Activated B cell treated with CpG ODN at 0.5 μM for 24 hours (primary cell): ENCODE measurements at regions of chrX and their contacts with region 1.

Region 1: GRCh38 chrX:39814391-39814790 is 283.4 kb downstream of the BCOR start:
- DNase-seq: no peak
- ATAC-seq: no peak
- H3K4me3 Mint-ChIP-seq: no peak overlapping the region
- H3K27ac Mint-ChIP-seq: no peak overlapping the region
- H3K4me1 Mint-ChIP-seq: peaks cover 8% of the 10 kb centered on the region
- H3K27me3 Mint-ChIP-seq: peaks cover 11% of the 10 kb centered on the region
- CTCF ChIP-seq: no peak

Region 2: GRCh38 chrX:39827951-39828350 is 13.6 kb after region 1 on chrX:
- CTCF ChIA-PET with region 1: no interaction called
- POLR2A ChIA-PET with region 1: no interaction called
- intact Hi-C with region 1: loop called (anchors 1 kb)
- DNase-seq: peak; percentile 57
- ATAC-seq: peak; percentile 100
- H3K4me3 Mint-ChIP-seq: peak overlapping the region; percentile 4
- H3K27ac Mint-ChIP-seq: no peak overlapping the region
- H3K4me1 Mint-ChIP-seq: peaks cover 29% of the 10 kb centered on the region
- H3K27me3 Mint-ChIP-seq: peaks cover 42% of the 10 kb centered on the region
- CTCF ChIP-seq: no peak

Region 3: DNA sequence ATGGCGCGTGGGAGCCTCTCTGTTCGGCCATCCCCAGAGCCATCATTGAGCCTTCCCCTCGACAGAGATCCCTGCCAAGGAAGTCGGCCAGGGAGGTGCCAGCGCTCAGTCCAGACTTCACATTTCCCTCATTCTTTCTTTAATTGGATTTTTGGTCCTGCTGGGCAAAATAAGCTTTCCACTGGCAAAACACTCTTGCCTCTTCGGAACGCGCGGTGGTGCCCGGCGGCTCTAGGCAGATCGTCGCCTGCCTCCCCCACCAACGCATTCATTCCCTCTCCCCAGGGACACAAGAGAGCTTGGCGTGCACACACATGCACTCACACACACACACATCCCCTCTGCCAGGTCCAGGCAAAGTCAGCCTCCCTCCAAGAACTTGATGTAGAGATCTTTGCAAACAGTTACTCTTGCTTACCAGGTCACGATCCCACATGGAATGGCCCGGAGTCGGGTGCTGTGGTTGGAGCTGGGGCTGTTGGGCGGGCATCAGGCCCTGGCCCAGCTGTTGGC is 26.2 kb after region 1 on chrX:
- CTCF ChIA-PET with region 1: no interaction called
- POLR2A ChIA-PET with region 1: no interaction called
- intact Hi-C with region 1: no loop called
- DNase-seq: no peak
- ATAC-seq: no peak
- H3K4me3 Mint-ChIP-seq: no peak overlapping the region
- H3K27ac Mint-ChIP-seq: peak overlapping the region; percentile 18
- H3K4me1 Mint-ChIP-seq: no peaks in the 10 kb centered on the region
- H3K27me3 Mint-ChIP-seq: peaks cover 14% of the 10 kb centered on the region
- CTCF ChIP-seq: no peak

Region 4: DNA sequence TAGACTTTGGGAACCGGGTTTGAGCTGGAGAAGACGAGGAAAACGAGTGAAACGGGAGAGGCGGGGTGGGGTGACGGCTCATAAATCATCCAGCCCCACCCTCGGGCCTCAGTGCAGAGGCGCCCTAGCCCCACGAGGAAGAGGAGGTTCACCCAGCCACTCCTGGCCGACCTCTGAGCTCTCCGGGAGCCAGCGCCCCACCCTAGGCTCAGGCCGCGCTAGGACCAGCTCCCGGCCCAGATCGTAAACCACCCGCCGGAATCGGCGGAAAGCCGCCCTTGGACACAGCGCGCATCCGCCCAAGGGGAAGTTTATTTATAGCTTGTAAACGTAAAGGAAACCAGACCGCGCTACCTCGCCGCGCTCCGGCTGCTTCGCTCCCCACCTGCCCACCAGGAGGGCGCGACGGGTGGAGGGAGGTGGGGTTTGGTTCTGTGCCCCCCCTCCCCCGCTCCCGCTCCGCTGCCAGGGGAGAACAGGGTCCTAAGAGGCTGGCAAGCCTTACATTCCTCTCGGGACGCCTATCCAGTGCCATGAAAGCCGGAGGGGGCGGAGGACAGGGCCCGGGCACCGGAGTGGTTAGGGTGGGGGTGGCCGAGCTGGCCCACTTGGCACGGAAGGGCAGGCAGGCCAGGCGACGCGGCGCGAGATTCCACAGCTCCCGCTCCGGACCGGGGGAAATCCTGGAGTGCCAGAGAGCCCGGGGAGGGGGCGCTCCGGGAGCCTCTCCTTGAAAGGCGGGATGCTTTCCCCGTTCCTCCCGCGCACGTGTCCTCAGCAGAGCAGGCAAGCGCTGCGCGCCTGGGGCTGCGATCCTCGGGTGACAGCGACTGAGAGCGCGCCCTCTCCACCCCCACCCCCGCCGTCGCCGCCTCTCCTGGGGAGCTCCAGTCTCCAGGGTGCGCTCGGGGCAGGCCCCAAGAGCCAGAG is 199.1 kb after region 1 on chrX:
- CTCF ChIA-PET with region 1: no interaction called
- POLR2A ChIA-PET with region 1: no interaction called
- intact Hi-C with region 1: loop called (anchors 5 kb)
- DNase-seq: peak; percentile 41
- ATAC-seq: peak; percentile 47
- H3K4me3 Mint-ChIP-seq: peak overlapping the region; percentile 76
- H3K27ac Mint-ChIP-seq: peak overlapping the region; percentile 56
- H3K4me1 Mint-ChIP-seq: peaks cover 26% of the 10 kb centered on the region
- H3K27me3 Mint-ChIP-seq: no peaks in the 10 kb centered on the region
- CTCF ChIP-seq: no peak

Region 5: DNA sequence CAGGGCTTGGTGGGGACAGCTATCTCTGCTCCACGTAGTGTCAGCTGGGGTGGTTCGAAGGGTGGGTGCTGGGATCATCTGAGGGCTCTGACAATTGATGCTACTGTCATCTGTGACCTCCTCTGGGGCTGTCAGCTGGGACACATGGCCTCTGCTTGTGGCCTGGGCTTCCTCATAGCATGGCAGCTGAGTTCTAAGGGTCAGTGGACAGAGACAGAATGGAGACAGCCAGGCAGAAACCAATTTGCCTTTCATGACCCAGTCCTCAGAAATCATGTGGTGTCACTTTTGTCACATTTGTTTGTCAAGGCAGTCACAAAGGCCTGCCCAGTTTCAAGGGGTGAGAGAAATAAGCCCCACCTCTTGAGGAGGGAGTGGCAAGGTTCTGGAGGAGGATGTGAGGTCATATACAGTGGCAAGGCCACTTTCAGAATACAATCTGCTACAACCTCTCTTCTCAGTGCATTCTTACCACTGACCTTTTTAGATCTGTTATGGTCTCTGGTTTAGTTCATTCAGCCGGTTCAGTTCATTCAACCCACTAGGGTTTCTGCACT is 387.0 kb after region 1 on chrX:
- CTCF ChIA-PET with region 1: no interaction called
- POLR2A ChIA-PET with region 1: no interaction called
- intact Hi-C with region 1: no loop called
- DNase-seq: no peak
- ATAC-seq: peak; percentile 82
- H3K4me3 Mint-ChIP-seq: no peak overlapping the region
- H3K27ac Mint-ChIP-seq: peak overlapping the region; percentile 30
- H3K4me1 Mint-ChIP-seq: peaks cover 16% of the 10 kb centered on the region
- H3K27me3 Mint-ChIP-seq: no peaks in the 10 kb centered on the region
- CTCF ChIP-seq: no peak